ENCODE measurements at regions of chr17 and their contacts with region 1.

Region 1: DNA sequence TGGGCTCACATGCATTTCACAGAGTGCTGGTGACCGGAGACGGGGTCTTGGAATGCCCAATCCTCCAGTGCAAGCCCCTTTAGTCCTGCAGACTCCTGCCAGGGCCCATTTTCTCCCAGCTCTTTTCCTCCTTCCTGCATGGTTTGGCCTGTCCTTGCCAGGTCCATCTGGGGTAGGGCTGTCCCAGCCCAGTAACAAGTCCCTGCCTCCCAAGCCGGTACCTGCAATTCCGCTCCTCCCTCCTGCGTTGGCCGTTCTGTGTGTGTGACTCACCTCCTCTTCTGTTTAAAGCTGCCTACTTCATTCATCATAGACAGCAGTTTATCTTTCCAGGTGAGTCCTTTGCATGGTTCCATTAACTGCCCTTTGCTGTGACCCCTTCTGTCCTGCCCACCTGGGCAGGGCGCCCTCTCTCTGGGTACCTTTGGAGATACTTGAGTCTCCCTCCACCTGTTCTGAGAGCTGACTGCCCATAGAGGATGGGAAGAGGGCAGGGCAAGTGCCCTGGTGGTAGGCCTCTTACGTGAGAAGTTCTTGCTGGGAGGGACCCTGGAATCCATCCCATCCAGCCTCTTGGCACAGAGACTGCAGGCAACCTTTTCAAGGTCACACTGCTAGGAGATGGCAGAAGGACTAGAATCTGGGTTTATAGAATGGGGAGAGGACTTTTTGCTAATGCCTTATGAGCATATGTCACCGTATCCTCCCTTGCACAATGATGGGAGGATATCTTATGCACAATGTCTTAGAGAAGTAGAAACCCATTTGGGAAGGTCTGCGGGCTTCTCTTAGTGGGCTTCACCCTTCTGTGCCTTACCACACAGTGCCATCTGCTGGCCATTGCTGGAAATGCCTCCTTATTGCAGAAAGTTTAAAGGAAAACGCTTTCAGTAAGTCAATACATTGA is 29.7 kb upstream of the LGALS9 start:
- DNase-seq: peak; percentile 72 to 90 (median 78)
- ATAC-seq: peak; percentile 47 to 80 (median 69)
- H3K4me3 ChIP-seq: no peak overlapping the region
- H3K27ac ChIP-seq: no peak overlapping the region
- H3K4me1 ChIP-seq: peaks cover 6 to 8% (median 8%) of the 10 kb centered on the region in 3 donors
- H3K27me3 ChIP-seq: no peaks in the 10 kb centered on the region
- CTCF ChIP-seq: peak; percentile 85 to 87 (median 86)

Region 2: GRCh38 chr17:27236717-27237315 is 364.5 kb before region 1 on chr17:
- intact Hi-C with region 1: loop called in 1 of 3 experiments (anchors 10 kb)
- DNase-seq: peak in 5 of 6 donors; percentile 55 to 85 (median 71)
- ATAC-seq: peak; percentile 82 to 93 (median 93)
- H3K4me3 ChIP-seq: no peak overlapping the region
- H3K27ac ChIP-seq: no peak overlapping the region
- H3K4me1 ChIP-seq: peaks cover 0 to 4% (median 0%) of the 10 kb centered on the region in 3 donors
- H3K27me3 ChIP-seq: no peaks in the 10 kb centered on the region
- CTCF ChIP-seq: peak; percentile 79 to 92 (median 85)

Region 3: DNA sequence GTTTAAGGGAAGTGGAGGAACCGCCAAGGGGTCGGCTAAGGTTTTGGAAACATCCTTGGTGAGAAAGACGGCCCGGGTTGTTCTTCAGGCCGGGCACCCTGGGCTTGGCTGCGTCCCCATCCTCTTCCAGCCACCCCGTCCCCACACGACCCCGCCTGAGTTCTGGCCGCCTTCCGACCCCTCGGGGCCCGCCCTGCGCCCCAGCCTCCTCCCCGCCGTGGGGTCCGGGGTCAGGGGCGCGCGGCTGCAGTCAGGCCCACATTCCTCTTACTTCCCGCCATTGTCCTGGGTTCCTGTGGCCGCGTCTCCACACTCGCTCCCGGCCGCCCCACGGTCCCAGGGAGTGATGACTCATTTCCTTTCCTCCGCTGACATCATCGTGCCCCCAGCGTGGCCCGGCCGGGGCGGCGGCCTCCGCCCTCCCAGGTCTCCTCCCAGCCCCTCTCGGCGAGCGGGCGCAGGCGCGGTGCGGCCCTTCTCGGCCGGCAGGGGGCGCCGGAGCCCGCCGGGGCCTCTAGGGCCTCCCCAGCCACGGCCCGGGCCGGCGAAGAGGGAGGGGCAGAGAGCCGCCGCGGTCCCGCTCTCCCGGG is 247.8 kb before region 1 on chr17:
- intact Hi-C with region 1: loop called in 2 of 3 experiments (anchors 5 to 10 kb)
- DNase-seq: peak; percentile 91 to 98 (median 96)
- ATAC-seq: peak; percentile 91 to 94 (median 92)
- H3K4me3 ChIP-seq: peak overlapping the region; percentile 68 to 84 (median 72)
- H3K27ac ChIP-seq: peak overlapping the region; percentile 87 to 96 (median 95)
- H3K4me1 ChIP-seq: peaks cover 0 to 13% (median 0%) of the 10 kb centered on the region in 3 donors
- H3K27me3 ChIP-seq: no peaks in the 10 kb centered on the region
- CTCF ChIP-seq: peak; percentile 94 to 96 (median 95)

Region 4: GRCh38 chr17:27654654-27655524 is 53.6 kb after region 1 on chr17:
- intact Hi-C with region 1: loop called in 2 of 3 experiments (anchors 2 to 5 kb)
- DNase-seq: peak in 5 of 6 donors; percentile 43 to 92 (median 74)
- ATAC-seq: peak; percentile 62 to 83 (median 74)
- H3K4me3 ChIP-seq: no peak overlapping the region
- H3K27ac ChIP-seq: no peak overlapping the region
- H3K4me1 ChIP-seq: no peaks in the 10 kb centered on the region
- H3K27me3 ChIP-seq: no peaks in the 10 kb centered on the region
- CTCF ChIP-seq: peak; percentile 81 to 98 (median 92)

Region 5: DNA sequence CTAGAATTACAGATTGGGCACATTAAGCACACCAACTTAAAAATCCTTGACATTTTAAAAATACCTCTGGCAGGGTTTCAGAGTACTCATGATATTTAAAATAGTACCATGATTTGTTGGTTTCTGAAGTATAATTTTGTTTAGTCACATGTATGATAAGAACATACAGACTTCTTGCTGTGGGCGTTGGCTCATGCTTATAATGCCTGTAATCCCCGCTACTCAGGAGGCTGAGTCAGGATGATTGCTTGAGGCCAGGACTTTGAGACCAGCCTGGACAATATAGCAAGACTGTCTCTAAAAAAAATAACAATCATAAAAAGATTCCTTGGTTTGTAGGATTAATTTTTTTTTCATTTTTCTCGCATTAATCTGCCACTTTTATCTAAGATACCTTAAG is 120.5 kb after region 1 on chr17:
- intact Hi-C with region 1: no loop called
- DNase-seq: no peak
- ATAC-seq: no peak
- H3K4me3 ChIP-seq: no peak overlapping the region
- H3K27ac ChIP-seq: no peak overlapping the region
- H3K4me1 ChIP-seq: no peaks in the 10 kb centered on the region
- H3K27me3 ChIP-seq: no peaks in the 10 kb centered on the region
- CTCF ChIP-seq: no peak

Measured in pancreas (tissue), 10 donors.